ENCODE measurements at regions of chr15 and their contacts with region 1.

Region 1: DNA sequence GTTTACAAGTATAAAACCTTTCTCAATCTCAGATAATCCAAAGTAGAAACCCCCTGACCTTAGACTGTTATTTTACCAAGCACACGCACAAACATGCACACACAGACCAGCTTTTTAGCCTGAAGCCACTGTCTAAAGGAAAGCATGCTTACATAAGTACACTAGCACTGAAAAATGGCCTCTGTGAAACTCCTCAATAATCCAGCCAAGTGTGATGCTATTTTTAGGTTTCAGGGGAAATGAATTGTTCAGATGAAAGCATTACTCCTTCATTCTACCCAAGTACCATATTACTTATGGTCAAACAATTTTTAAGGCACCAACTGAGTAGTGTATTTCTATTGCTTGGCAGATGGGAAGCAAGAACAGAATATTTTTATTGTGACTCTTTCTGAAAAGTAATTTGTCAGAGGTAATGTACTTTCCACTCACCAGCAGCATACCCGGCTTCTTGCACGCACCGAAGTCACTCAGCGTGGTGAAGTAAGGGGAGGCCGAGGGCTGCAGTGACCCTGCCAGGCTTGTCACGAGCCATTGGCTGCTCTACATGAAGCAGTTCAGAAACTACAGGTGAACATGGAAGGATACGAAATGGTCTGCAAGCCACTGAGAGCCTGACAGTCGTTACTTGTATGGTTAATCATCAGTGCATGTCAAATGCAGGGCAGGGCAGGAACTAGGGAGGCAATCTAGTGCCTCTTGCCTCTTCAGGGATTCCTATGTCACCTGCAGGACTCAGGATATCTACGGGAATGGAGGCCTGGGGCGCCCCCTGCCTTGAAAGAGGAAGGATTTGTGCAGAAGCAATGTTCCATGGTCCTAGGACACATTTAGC is 106.7 kb downstream of the GABRB3 start:
- DNase-seq: no peak
- ATAC-seq: no peak
- H3K4me3 ChIP-seq: no peak overlapping the region
- H3K27ac ChIP-seq: no peak overlapping the region
- H3K4me1 ChIP-seq: no peaks in the 10 kb centered on the region
- H3K27me3 ChIP-seq: no peaks in the 10 kb centered on the region
- CTCF ChIP-seq: no peak
- EP300 ChIP-seq: no peak
- POLR2A ChIP-seq: no peak
- RAD21 ChIP-seq: no peak

Region 2: DNA sequence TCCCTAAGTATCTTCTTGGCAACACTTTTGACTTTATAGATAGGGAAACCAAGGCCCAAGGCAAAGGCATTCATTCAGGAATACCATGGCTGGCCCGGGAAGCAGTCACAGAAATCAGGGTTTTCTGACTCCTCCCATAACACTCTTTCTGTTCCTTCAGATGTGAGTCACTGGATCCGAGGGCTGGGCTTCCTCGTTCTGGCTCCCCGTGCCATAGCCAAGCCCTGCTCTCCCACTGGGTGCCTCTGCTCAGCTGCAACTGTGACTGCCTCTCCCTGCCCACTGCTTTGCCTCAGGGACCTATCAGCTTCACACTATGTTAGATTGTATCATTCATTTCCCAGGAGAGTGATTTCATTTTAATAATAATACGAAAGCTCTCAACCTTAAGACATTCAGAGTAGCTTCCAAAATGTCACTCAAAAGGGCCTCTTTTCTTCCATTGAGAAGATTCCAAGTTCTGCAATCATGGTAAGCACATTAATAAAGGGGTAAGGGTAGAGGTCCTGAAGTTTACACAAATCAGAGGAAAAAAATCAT is 56.5 kb after region 1 on chr15:
- CTCF ChIA-PET with region 1: no interaction called
- POLR2A ChIA-PET with region 1: no interaction called
- RAD21 ChIA-PET with region 1: no interaction called
- SMC1A ChIA-PET with region 1: no interaction called
- in situ Hi-C with region 1: loop called (anchors 10 kb)
- intact Hi-C with region 1: no loop called
- DNase-seq: no peak
- ATAC-seq: no peak
- H3K4me3 ChIP-seq: no peak overlapping the region
- H3K27ac ChIP-seq: no peak overlapping the region
- H3K4me1 ChIP-seq: no peaks in the 10 kb centered on the region
- H3K27me3 ChIP-seq: no peaks in the 10 kb centered on the region
- CTCF ChIP-seq: no peak
- EP300 ChIP-seq: no peak
- POLR2A ChIP-seq: no peak
- RAD21 ChIP-seq: no peak